ENCODE measurements at regions of chr2 and their contacts with region 1.

Region 1: GRCh38 chr2:43059183-43059897 is 167.1 kb downstream of the ZFP36L2 start:
- DNase-seq: peak; percentile 80
- H3K4me3 ChIP-seq: no peak overlapping the region
- H3K27ac ChIP-seq: no peak overlapping the region
- H3K4me1 ChIP-seq: peaks cover 11% of the 10 kb centered on the region
- H3K27me3 ChIP-seq: no peaks in the 10 kb centered on the region
- CTCF ChIP-seq: no peak

Region 2: GRCh38 chr2:43070039-43070438 is 10.7 kb after region 1 on chr2:
- CTCF ChIA-PET with region 1: no interaction called
- dilution Hi-C with region 1: no loop called
- in situ Hi-C with region 1: no loop called
- intact Hi-C with region 1: loop called (anchors 1 kb)
- DNase-seq: no peak
- H3K4me3 ChIP-seq: no peak overlapping the region
- H3K27ac ChIP-seq: no peak overlapping the region
- H3K4me1 ChIP-seq: peaks cover 41% of the 10 kb centered on the region
- H3K27me3 ChIP-seq: no peaks in the 10 kb centered on the region
- CTCF ChIP-seq: no peak

Measured in mammary epithelial cell (primary cell).